ENCODE measurements at regions of chr1 and their contacts with region 1.

Region 1: DNA sequence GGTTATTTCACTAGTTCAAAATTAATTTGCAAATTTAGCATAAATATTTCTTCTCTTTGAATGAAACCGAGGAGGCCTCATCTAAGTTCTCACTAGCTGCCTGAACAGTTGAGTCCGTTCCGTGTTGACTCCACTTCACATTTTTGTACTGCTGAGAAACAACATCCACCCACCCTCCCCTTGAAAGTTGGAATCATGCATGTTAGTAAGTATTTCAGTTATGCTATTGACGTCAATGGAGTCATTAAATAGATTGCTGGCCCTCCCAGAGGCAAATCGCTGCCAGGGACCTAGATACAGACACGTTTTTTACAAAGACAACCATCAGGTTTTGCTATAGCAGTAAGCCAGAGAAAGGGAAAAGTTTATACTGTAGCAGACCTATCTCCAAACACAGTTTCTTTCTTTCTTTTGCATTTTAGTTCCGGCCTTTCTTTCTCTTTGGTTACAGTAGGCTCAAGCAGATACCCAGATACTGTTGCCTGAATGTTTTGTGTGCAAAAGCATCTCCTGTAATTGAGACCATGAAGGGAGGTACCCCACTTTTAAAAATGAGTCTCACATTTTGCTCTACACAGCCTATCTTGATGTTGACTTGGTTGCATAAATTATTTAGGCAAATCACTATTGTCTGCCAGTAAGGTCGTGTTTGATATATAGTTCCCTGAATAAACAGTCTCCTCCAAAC is 262.6 kb upstream of the SGIP1 start:
- DNase-seq: peak; percentile 39 to 92
- H3K4me3 ChIP-seq: peak overlapping the region; percentile 14 to 43
- H3K27ac ChIP-seq: peak overlapping the region; percentile 47 to 79
- H3K4me1 ChIP-seq: peaks cover 12 to 22% of the 10 kb centered on the region in 2 donors
- H3K27me3 ChIP-seq: no peaks in the 10 kb centered on the region
- CTCF ChIP-seq: no peak

Region 2: GRCh38 chr1:66217021-66217420 is 54.3 kb before region 1 on chr1:
- intact Hi-C with region 1: no loop called
- DNase-seq: no peak
- H3K4me3 ChIP-seq: no peak overlapping the region
- H3K27ac ChIP-seq: no peak overlapping the region
- H3K4me1 ChIP-seq: no peaks in the 10 kb centered on the region
- H3K27me3 ChIP-seq: no peaks in the 10 kb centered on the region
- CTCF ChIP-seq: no peak

Region 3: DNA sequence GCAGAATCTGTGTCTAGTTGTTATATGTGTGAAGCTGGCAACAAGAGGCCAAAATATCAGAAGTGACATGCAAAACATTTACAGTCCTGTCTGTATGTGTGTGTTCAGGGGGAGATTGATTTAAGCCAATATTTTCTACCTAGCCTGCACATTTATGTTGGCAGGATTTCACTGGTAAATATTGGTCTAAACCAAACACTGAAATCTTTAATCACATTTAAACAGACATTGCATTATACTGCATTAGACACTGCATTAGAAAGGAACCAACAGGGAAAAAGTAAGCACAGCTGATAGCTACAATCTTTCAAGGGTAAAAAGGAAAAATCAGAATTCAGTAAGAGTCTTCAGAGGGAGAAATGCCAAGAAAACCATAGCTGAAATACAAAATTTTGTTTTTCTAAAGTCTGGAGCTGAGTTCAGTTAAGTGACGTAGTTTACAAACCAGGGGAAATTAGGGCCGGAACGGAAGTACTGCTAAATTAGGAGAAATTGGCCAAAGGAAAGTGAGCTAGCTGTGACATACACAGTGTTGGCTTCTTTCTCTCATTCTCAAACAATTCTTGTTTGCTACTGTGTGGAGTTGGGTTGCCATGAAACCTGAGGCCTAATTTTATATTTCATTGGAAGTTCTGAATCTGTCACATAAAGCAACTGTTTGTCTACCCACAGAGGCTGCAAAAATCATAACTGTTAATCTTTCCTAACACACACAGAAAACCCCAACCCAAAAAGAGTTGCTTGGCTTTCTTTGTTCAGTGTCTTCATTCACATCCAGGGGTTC is 45.3 kb after region 1 on chr1:
- intact Hi-C with region 1: loop called (anchors 5 kb)
- DNase-seq: no peak
- H3K4me3 ChIP-seq: no peak overlapping the region
- H3K27ac ChIP-seq: peak overlapping the region; percentile 79 to 86
- H3K4me1 ChIP-seq: peaks cover 0 to 10% of the 10 kb centered on the region in 2 donors
- H3K27me3 ChIP-seq: no peaks in the 10 kb centered on the region
- CTCF ChIP-seq: no peak

Region 4: DNA sequence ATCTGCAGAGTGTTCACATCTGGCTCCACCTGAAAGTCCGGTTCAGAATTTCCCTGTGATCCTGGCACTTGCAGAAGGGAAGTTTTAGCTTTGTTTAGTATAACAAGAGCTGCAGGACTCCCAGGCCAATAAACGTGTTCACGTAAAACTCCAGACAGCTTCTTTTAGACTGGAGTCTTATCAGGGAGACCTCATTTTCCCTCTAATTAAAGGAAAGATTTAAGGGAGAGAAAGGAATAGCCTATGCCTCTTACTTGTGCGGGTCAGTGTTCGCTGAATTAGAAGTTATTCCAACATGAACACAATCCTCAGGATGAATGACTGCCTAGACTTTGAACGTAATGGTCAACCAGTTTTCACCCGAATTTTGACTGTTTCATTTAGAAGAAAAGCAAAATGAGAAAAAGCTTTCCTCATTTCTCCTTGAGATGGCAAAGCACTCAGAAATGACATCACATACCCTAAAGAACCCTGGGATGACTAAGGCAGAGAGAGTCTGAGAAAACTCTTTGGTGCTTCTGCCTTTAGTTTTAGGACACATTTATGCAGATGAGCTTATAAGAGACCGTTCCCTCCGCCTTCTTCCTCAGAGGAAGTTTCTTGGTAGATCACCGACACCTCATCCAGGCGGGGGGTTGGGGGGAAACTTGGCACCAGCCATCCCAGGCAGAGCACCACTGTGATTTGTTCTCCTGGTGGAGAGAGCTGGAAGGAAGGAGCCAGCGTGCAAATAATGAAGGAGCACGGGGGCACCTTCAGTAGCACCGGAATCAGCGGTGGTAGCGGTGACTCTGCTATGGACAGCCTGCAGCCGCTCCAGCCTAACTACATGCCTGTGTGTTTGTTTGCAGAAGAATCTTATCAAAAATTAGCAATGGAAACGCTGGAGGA is 60.5 kb after region 1 on chr1:
- intact Hi-C with region 1: loop called (anchors 1 kb)
- DNase-seq: peak in 1 of 2 donors; percentile 83
- H3K4me3 ChIP-seq: peak overlapping the region; percentile 50 to 65
- H3K27ac ChIP-seq: peak overlapping the region; percentile 80 to 84
- H3K4me1 ChIP-seq: peaks cover 0 to 23% of the 10 kb centered on the region in 2 donors
- H3K27me3 ChIP-seq: no peaks in the 10 kb centered on the region
- CTCF ChIP-seq: peak; percentile 15 to 44 (median 31)

Region 5: DNA sequence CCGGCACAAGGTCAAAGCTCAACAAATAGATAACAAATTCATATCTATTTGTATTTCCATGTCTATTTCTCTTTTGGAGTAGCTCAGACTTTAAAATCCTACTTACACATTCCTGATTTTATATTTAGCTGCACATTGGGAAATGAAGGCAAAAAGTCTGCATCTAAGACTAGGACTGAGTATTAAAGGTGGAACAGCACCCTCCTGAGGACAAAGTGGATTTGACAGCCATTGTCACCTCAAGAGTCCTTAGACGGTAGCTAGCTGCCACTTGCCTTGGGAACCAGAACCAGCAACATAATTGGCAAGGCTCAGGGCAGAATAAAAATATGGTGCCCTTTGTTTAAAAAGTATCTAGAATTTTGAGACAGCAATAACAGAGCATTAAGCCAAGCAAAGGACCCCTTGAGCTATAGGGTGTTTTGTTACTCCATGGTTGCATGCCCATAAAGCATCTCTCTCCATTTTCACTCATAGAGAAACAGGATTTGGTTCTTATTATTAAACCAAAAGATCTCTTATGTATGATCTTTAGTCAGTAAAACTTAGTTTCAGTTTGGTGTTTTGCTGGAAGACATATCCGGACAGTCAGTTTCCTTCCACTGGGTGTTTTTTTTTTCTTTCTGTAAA is 232.6 kb after region 1 on chr1:
- intact Hi-C with region 1: no loop called
- DNase-seq: no peak
- H3K4me3 ChIP-seq: no peak overlapping the region
- H3K27ac ChIP-seq: no peak overlapping the region
- H3K4me1 ChIP-seq: no peaks in the 10 kb centered on the region
- H3K27me3 ChIP-seq: no peaks in the 10 kb centered on the region
- CTCF ChIP-seq: peak; percentile 41 to 65 (median 50)

Region 6: GRCh38 chr1:66924756-66925557 is 653.6 kb after region 1 on chr1 and contains the starts of genes DNAI4 and MIER1:
- intact Hi-C with region 1: loop called (anchors 10 kb)
- DNase-seq: peak; percentile 95 to 99
- H3K4me3 ChIP-seq: peak within 1 kb of the TSS; percentile 71 to 74
- H3K27ac ChIP-seq: peak within 1 kb of the TSS; percentile 85 to 95
- H3K4me1 ChIP-seq: peaks cover 10% of the 10 kb centered on the region in 2 donors
- H3K27me3 ChIP-seq: no peaks in the 10 kb centered on the region
- CTCF ChIP-seq: peak in 1 of 3 experiments; percentile 17
- total RNA-seq, gene DNAI4: not detected
- total RNA-seq, gene MIER1: 18.4 TPM

Measured in ascending aorta (tissue), 2 donors.